CD4-positive, alpha-beta T cell (primary cell): ENCODE measurements at regions of chr3 and their contacts with region 1.

Region 1: GRCh38 chr3:16692486-16693378 is 87.5 kb upstream of the DAZL start:
- DNase-seq: no peak
- ATAC-seq: no peak
- H3K4me3 ChIP-seq: no peak overlapping the region
- H3K4me3 Mint-ChIP-seq: no peak overlapping the region
- H3K27ac ChIP-seq: no peak overlapping the region
- H3K27ac Mint-ChIP-seq: no peak overlapping the region
- H3K4me1 ChIP-seq: no peaks in the 10 kb centered on the region
- H3K4me1 Mint-ChIP-seq: no peaks in the 10 kb centered on the region
- H3K27me3 ChIP-seq: no peaks in the 10 kb centered on the region
- H3K27me3 Mint-ChIP-seq: peaks cover 4% of the 10 kb centered on the region
- CTCF ChIP-seq: no peak

Region 2: DNA sequence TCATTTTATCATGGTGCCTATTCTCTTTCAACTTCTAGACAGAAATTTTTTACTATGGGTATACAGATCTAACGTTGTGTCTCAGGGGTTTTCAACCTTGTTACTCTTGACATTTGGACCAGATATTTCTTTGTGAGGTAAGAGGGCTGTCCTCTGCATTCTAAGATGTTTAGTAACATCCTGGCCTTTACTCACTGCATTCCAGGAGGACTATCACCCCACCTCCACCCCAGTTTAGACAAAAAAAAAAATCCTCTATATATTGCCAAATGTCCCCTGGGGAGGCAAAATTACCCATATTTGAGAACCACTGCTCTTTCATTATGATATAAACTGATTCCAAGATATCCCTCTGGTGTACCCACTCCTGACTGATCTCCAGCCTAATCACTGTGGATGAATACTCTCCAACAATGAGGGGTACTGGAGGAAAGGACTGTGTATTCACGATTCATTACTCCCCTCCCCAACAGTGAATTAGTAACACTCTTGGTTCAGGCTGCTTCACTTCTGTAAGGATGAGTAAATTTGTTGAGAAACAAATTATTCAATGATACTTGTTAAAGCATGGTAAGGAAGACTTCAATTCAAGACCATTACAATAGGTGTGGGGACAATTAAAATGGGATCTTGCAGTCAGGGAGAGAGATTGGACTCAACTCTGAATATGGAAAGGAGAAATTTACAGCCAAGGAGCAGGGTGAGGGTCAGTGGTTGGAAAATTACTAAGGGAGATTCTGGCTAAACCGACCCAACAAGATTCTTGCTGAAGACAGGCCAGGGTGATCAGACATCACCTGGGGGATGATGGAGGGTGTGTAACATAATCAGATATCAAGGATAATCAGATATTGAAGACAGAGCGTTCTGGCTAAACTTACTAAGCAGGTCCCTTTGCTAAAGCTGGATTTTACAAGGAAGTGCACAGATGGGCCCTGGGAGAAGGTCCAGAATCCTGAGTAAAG is 36.3 kb after region 1 on chr3:
- CTCF ChIA-PET with region 1: no interaction called
- POLR2A ChIA-PET with region 1: no interaction called
- intact Hi-C with region 1: loop called in 1 of 2 experiments (anchors 1 kb)
- DNase-seq: no peak
- ATAC-seq: no peak
- H3K4me3 ChIP-seq: no peak overlapping the region
- H3K4me3 Mint-ChIP-seq: no peak overlapping the region
- H3K27ac ChIP-seq: no peak overlapping the region
- H3K27ac Mint-ChIP-seq: no peak overlapping the region
- H3K4me1 ChIP-seq: no peaks in the 10 kb centered on the region
- H3K4me1 Mint-ChIP-seq: no peaks in the 10 kb centered on the region
- H3K27me3 ChIP-seq: no peaks in the 10 kb centered on the region
- H3K27me3 Mint-ChIP-seq: no peaks in the 10 kb centered on the region
- CTCF ChIP-seq: no peak

Region 3: GRCh38 chr3:16801698-16802097 is 109.0 kb after region 1 on chr3:
- CTCF ChIA-PET with region 1: no interaction called
- POLR2A ChIA-PET with region 1: no interaction called
- intact Hi-C with region 1: no loop called
- DNase-seq: peak in 2 of 14 experiments; percentile 39 to 43
- ATAC-seq: peak; percentile 64
- H3K4me3 ChIP-seq: no peak overlapping the region
- H3K4me3 Mint-ChIP-seq: no peak overlapping the region
- H3K27ac ChIP-seq: no peak overlapping the region
- H3K27ac Mint-ChIP-seq: peak overlapping the region; percentile 63
- H3K4me1 ChIP-seq: peaks cover 9% of the 10 kb centered on the region
- H3K4me1 Mint-ChIP-seq: peaks cover 34% of the 10 kb centered on the region
- H3K27me3 ChIP-seq: no peaks in the 10 kb centered on the region
- H3K27me3 Mint-ChIP-seq: no peaks in the 10 kb centered on the region
- CTCF ChIP-seq: no peak